Activated naive CD4-positive, alpha-beta T cell treated with anti-CD3 and anti-CD28 coated beads, Interleukin-2, amount 10 ng/mL, durations not matched to agents 7 days and 5 days (primary cell): ENCODE measurements at regions of chr14 and their contacts with region 1.

Region 1: GRCh38 chr14:50778721-50779483 is 52.1 kb downstream of the NIN start:
- DNase-seq: no peak
- H3K4me3 Mint-ChIP-seq: no peak overlapping the region
- H3K27ac Mint-ChIP-seq: peak overlapping the region; percentile 40
- H3K4me1 Mint-ChIP-seq: peaks cover 35% of the 10 kb centered on the region
- H3K27me3 Mint-ChIP-seq: no peaks in the 10 kb centered on the region

Region 2: GRCh38 chr14:50532502-50533240 is 246.2 kb before region 1 on chr14 and contains the start of gene MAP4K5:
- CTCF ChIA-PET with region 1: no interaction called
- DNase-seq: peak; percentile 92
- H3K4me3 Mint-ChIP-seq: peak within 1 kb of the TSS; percentile 89
- H3K27ac Mint-ChIP-seq: peak within 1 kb of the TSS; percentile 84
- H3K4me1 Mint-ChIP-seq: peaks cover 39% of the 10 kb centered on the region
- H3K27me3 Mint-ChIP-seq: peaks cover 22% of the 10 kb centered on the region

Region 3: GRCh38 chr14:50542941-50543418 is 235.9 kb before region 1 on chr14:
- CTCF ChIA-PET with region 1: interaction called, 40 read pairs
- DNase-seq: peak; percentile 60
- H3K4me3 Mint-ChIP-seq: no peak overlapping the region
- H3K27ac Mint-ChIP-seq: no peak overlapping the region
- H3K4me1 Mint-ChIP-seq: peaks cover 13% of the 10 kb centered on the region
- H3K27me3 Mint-ChIP-seq: peaks cover 12% of the 10 kb centered on the region

Region 4: DNA sequence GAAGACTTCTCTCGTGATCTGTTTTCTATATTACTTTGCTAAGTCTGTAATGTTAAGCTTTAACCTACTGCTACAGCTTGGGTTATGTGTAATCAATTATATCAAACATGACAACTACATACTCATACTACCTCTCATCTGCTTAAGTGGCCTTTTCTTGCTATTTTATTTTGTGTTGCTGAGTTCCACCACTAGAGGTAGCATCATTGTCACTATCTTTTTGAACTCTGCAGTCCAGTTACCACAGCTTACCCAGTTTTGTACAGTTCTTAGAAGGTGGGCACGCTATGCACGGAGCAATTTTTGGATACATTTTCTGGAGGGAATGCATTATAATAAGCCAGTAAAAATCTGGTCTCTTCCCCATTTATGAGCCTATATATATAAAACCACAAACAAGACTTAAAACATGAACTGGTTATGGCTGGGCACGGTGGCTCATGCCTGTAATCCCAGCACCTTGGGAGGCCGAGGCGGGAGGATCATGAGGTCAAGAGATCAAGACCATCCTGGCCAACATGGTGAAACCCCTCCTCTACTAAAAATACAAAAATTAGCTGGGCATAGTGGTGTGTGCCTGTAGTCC is 159.3 kb before region 1 on chr14:
- CTCF ChIA-PET with region 1: interaction called, 44 read pairs
- DNase-seq: no peak
- H3K4me3 Mint-ChIP-seq: no peak overlapping the region
- H3K27ac Mint-ChIP-seq: no peak overlapping the region
- H3K4me1 Mint-ChIP-seq: no peaks in the 10 kb centered on the region
- H3K27me3 Mint-ChIP-seq: no peaks in the 10 kb centered on the region

Region 5: DNA sequence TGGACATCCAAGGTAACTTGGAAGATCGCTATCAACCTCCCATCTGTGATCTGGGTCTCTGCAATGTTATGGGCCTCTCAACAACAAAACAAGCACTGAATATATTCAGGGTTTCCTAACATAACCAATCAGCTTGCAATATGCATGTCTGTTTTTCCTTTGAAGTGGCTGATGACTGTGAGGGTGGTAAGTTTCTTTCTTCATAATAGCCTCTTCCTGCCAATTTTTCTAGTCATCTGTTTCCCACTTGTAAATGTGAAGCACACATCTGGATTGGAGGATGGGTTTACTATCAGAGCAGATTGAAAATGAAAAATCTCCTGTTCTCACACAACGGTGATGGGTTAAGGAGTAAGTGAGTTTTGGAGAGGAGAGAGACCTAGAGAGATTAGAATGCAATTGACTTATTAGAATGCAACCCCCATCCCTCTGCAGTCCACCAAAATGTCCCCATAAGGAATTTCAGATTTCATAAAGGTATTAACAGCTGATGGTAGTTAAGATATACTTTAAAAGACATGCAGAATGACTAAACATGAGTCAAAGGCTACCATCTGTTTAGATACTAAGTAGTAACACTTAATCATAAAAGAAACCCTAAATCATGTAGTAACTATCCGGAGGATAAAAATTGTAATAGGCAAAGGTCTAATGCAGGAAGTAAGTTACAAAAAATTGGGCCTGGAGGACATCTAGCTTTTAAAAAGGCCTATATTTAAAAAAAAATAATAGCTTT is 52.4 kb before region 1 on chr14:
- CTCF ChIA-PET with region 1: interaction called, 12 read pairs
- DNase-seq: peak; percentile 29
- H3K4me3 Mint-ChIP-seq: peak overlapping the region; percentile 11
- H3K27ac Mint-ChIP-seq: peak overlapping the region; percentile 91
- H3K4me1 Mint-ChIP-seq: peaks cover 32% of the 10 kb centered on the region
- H3K27me3 Mint-ChIP-seq: no peaks in the 10 kb centered on the region

Region 6: GRCh38 chr14:51006781-51007211 is 227.9 kb after region 1 on chr14:
- CTCF ChIA-PET with region 1: no interaction called
- DNase-seq: no peak
- H3K4me3 Mint-ChIP-seq: no peak overlapping the region
- H3K27ac Mint-ChIP-seq: no peak overlapping the region
- H3K4me1 Mint-ChIP-seq: no peaks in the 10 kb centered on the region
- H3K27me3 Mint-ChIP-seq: peaks cover 5% of the 10 kb centered on the region